MCF 10A (cell line): ENCODE measurements at regions of chr6 and their contacts with region 1.

Region 1: GRCh38 chr6:10747251-10747972 is at the start of gene TMEM14B:
- DNase-seq: peak; percentile 97
- H3K4me3 Mint-ChIP-seq: peak within 1 kb of the TSS; percentile 95
- H3K27ac Mint-ChIP-seq: peak within 1 kb of the TSS; percentile 95
- H3K4me1 Mint-ChIP-seq: peaks cover 18% of the 10 kb centered on the region
- H3K27me3 Mint-ChIP-seq: no peaks in the 10 kb centered on the region
- CTCF ChIP-seq: no peak
- total RNA-seq, gene TMEM14B: 122 and 143 TPM in 2 replicates

Region 2: DNA sequence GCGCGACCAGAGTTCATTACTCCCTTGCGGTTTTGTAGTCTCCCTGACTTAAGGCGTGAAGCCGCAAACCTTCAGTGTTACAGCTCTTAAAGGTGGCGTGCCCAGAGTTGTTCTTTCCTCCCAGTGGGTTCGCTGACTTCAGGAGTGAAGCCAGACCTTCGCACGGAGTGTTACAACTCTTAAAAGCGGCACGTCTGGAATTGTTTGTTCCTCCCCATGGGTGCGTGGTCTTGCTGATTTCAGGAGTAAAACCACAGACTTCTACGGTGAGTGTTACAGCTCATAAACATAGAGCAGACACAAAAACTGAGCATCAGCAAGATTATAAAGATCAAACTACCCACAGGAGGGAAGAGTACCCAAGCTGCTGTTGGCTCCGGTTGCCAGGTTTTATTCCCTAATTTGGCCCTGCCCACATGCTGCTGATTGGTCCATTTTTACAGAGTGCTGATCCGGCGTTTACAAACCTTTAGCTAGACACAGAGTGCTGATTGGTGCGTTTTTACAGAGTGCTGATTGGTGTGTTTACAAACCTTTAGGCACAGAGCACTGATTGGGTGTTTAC is 14.2 kb before region 1 on chr6:
- CTCF ChIA-PET with region 1: interaction called, 4 read pairs
- POLR2A ChIA-PET with region 1: interaction called, 31 read pairs
- intact Hi-C with region 1: no loop called
- DNase-seq: no peak
- H3K4me3 Mint-ChIP-seq: no peak overlapping the region
- H3K27ac Mint-ChIP-seq: peak overlapping the region; percentile 88
- H3K4me1 Mint-ChIP-seq: peaks cover 7% of the 10 kb centered on the region
- H3K27me3 Mint-ChIP-seq: no peaks in the 10 kb centered on the region
- CTCF ChIP-seq: no peak